ENCODE measurements at regions of chr1 and their contacts with region 1.

Region 1: GRCh38 chr1:226736908-226737818 is 1.9 kb downstream of the ITPKB start:
- DNase-seq: peak; percentile 56 to 96 (median 72)

Region 2: GRCh38 chr1:226634166-226634588 is 103.0 kb before region 1 on chr1:
- intact Hi-C with region 1: loop called (anchors 2 kb)
- DNase-seq: peak; percentile 67 to 97 (median 88)

Region 3: DNA sequence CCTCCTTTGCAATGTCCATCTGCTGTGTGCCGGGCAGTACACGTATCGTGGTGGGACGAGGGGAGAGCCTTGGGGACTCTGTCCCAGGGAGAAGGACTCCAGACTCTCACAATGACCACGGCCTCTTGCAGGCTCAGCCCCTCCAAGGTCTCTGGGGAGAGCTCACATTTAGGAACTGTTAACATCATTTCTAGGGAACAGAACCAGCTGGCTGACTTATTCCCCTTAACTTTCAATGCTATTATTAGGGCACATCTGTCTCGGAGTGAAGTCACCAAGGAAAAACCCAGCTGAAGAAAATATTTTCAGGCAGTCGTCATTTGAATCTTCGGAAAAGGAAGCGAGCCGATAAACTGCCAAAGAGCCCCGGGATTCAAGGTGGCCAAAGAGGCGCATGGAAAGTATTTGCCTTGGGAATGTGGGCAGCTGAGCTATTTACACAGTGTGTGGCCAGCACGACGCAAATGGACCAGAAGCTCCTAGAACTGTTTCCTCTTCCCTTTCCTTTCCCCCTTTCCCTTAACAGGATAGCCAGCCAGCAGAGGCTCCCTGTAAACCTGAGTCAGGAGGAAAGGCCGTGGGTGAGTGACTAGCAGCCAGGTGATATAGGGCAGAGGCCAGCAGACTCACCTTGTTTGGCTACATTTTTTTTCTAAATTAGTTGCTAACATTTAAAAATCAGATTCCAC is 72.6 kb before region 1 on chr1:
- intact Hi-C with region 1: no loop called
- DNase-seq: peak in 2 of 10 donors; percentile 54 to 57

Region 4: GRCh38 chr1:226679853-226680516 is 57.2 kb before region 1 on chr1:
- intact Hi-C with region 1: loop called (anchors 10 kb)
- DNase-seq: peak in 7 of 10 donors; percentile 67 to 96 (median 76)

Region 5: GRCh38 chr1:226702957-226703831 is 34.0 kb before region 1 on chr1:
- intact Hi-C with region 1: loop called (anchors 5 kb)
- DNase-seq: peak; percentile 59 to 97 (median 72)